HepG2 (cell line): ENCODE measurements at regions of chr10 and their contacts with region 1.

Region 1: DNA sequence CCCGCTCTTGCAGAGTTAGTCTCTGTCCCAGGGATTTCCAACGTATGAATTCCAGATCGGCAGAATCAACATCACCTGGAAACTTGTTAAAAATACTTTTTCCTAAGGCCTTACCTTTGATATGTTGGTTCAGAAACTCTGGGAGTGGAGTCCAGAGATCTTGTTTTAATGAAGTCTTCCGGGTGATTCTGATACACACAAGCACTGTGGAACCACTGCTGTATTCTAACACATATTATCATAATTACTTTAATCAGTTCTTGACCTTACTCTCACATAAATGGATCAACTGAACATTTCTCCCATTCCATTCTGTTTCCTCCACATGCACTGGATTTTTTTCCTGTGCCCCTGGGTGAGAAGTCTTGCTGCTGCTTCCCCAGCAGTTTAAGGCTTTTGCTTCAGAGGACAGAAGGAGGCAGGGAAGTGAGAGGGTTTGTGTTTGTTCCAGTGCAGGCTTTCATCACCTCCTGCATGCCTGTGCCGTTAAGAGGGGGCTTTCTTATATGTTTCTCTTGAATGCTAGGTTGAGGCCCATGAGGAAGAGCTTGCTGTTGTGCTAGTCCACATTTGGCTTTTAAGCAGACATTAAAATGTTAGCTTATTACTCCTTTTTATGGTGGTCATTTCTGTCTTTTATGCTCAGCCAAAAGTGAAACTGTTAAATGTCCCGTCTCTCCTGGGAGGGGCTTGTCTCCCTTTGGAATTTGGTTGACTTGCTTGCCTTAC is 32.4 kb downstream of the CCSER2 start:
- DNase-seq: no peak
- ATAC-seq: peak; percentile 60
- H3K4me3 ChIP-seq: peak overlapping the region; percentile 3 to 49 (median 9); a peak in 4 of 6 replicates
- H3K27ac ChIP-seq: no peak overlapping the region
- H3K4me1 ChIP-seq: peaks cover 56% of the 10 kb centered on the region
- H3K27me3 ChIP-seq: no peaks in the 10 kb centered on the region
- CTCF ChIP-seq: no peak
- EP300 ChIP-seq: no peak
- POLR2A ChIP-seq: no peak
- RAD21 ChIP-seq: no peak

Region 2: DNA sequence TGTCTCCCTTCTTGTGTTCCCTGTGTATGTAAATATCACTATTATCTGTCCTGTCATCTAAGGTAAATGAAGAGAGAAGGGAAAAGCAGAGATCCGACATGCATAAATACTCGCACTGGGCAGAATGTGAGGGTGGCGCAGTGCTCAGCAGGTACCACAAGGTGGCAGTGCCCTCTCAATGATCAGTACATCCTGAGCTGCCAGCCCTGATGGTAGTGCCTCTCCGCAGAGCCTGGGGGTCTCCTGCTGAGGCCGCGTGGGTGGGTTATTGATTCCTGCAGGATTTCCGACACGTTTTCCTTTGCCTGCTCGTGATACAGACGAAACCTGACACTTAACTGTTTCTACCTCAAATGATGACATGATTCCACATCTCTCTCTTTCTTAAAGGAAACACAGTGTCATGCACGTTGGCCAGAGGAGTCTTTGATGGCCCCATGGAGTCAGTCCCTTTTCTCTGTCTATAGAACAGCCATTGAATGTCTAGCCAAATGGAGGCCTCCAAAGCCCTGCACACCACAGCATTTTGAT is 96.1 kb before region 1 on chr10:
- CTCF ChIA-PET with region 1: no interaction called
- POLR2A ChIA-PET with region 1: no interaction called
- in situ Hi-C with region 1: loop called (anchors 10 kb)
- intact Hi-C with region 1: no loop called
- DNase-seq: peak; percentile 41
- ATAC-seq: peak; percentile 97
- H3K4me3 ChIP-seq: no peak overlapping the region
- H3K27ac ChIP-seq: no peak overlapping the region
- H3K4me1 ChIP-seq: peaks cover 5% of the 10 kb centered on the region; the same call in 1 of the 2 replicates
- H3K27me3 ChIP-seq: peaks cover 3 to 24% of the 10 kb centered on the region in 2 experiments; a peak in 3 of 5 replicates
- CTCF ChIP-seq: peak; percentile 97
- EP300 ChIP-seq: no peak
- POLR2A ChIP-seq: no peak
- RAD21 ChIP-seq: peak; percentile 78

Region 3: GRCh38 chr10:84317174-84317573 is 43.6 kb before region 1 on chr10:
- CTCF ChIA-PET with region 1: no interaction called
- POLR2A ChIA-PET with region 1: no interaction called
- in situ Hi-C with region 1: no loop called
- intact Hi-C with region 1: no loop called
- DNase-seq: no peak
- ATAC-seq: no peak
- H3K4me3 ChIP-seq: no peak overlapping the region
- H3K27ac ChIP-seq: no peak overlapping the region
- H3K4me1 ChIP-seq: no peaks in the 10 kb centered on the region
- H3K27me3 ChIP-seq: peaks cover 0 to 4% of the 10 kb centered on the region in 2 experiments; a peak in 1 of 5 replicates
- CTCF ChIP-seq: no peak
- EP300 ChIP-seq: no peak
- POLR2A ChIP-seq: no peak
- RAD21 ChIP-seq: no peak

Region 4: GRCh38 chr10:84348860-84349259 is 11.9 kb before region 1 on chr10:
- CTCF ChIA-PET with region 1: no interaction called
- POLR2A ChIA-PET with region 1: no interaction called
- in situ Hi-C with region 1: no loop called
- intact Hi-C with region 1: no loop called
- DNase-seq: no peak
- ATAC-seq: no peak
- H3K4me3 ChIP-seq: no peak overlapping the region
- H3K27ac ChIP-seq: no peak overlapping the region
- H3K4me1 ChIP-seq: peaks cover 5% of the 10 kb centered on the region
- H3K27me3 ChIP-seq: no peaks in the 10 kb centered on the region
- CTCF ChIP-seq: no peak
- EP300 ChIP-seq: no peak
- POLR2A ChIP-seq: no peak
- RAD21 ChIP-seq: no peak